WTC11 (cell line): ENCODE measurements at regions of chr21 and their contacts with region 1.

Region 1: DNA sequence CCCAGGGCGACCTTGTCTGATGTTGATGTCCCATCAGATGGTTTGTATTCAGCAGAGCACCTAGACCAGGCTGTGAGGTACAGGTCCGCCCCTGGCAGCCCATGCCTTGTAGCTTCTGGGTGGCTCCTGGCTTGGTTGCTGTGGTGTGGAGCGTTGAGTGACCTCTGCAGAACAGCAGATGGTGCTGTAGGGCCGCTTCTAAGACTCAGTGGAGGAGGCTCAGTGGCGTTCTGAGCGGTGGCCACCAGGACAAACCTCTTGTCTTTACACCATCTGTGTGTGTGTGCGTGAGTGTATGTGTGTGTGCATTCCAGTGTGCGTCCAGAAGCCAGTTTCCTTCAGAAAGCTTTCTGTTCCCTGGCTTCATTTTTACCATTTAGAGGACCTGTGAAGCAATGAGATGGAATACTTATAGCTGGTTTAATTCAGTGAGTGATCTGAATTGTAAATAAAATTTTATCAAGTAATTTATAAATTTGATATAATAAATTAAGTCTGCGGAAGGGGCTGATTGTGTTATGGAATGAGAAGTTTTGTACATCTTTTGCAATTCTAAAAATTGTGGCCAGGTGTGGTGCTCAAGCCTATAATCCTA is 66.1 kb downstream of the ADARB1 start:
- DNase-seq: peak; percentile 85
- ATAC-seq: peak; percentile 95
- H3K4me3 Mint-ChIP-seq: no peak overlapping the region
- H3K27ac Mint-ChIP-seq: no peak overlapping the region
- H3K4me1 Mint-ChIP-seq: peaks cover 3% of the 10 kb centered on the region; the same call in 1 of the 2 replicates
- H3K27me3 Mint-ChIP-seq: no peaks in the 10 kb centered on the region
- CTCF ChIP-seq: peak; percentile 54; the same call in 1 of the 2 replicates

Region 2: DNA sequence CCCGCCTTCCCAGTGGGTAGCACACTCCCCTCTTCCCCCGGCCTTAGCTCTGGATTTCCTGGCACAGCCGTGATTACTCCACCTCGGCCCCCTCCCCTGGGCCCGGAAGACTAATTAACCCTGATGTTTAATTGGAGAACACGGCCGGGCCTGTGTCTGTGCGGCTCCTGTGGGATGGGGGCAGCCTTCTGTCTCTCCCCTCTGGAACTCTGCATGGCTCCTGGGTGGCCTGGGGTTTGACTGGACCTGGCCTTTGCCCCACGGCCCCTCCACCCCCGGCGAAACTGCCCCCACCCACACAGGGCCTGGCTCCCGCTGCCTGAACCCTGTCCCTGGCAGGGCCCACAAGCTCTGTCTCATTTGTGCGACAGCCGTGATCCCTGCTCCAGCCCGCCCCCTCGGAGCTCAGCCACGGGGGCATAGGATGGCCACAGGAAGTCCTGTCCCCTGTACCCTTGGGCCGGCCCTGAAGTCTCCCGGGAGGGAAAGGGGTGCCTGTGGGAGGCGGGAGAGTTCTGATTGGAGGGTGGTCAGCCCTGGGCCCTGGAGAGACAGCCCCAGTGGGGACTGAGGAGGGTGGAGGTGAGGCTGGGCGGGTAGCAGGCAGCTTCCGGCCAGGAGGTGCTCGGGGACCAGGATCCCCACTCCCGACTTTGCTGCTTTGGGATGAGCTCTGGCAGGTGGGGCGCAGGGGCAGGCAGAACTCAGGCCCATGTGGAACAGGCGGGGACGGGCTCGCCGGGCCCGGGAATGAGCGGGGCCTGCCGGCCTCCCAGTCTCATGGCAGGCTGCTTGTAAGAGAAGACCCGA is 155.6 kb before region 1 on chr21:
- CTCF ChIA-PET with region 1: interaction called, 13 read pairs
- POLR2A ChIA-PET with region 1: no interaction called
- DNase-seq: peak; percentile 23
- ATAC-seq: peak; percentile 51
- H3K4me3 Mint-ChIP-seq: no peak overlapping the region
- H3K27ac Mint-ChIP-seq: no peak overlapping the region
- H3K4me1 Mint-ChIP-seq: no peaks in the 10 kb centered on the region
- H3K27me3 Mint-ChIP-seq: no peaks in the 10 kb centered on the region
- CTCF ChIP-seq: no peak

Region 3: GRCh38 chr21:45102391-45102932 is 38.0 kb before region 1 on chr21:
- CTCF ChIA-PET with region 1: interaction called, 16 read pairs
- POLR2A ChIA-PET with region 1: no interaction called
- DNase-seq: no peak
- ATAC-seq: peak; percentile 43
- H3K4me3 Mint-ChIP-seq: no peak overlapping the region
- H3K27ac Mint-ChIP-seq: peak overlapping the region; percentile 25; the same call in 1 of the 2 replicates
- H3K4me1 Mint-ChIP-seq: peaks cover 8% of the 10 kb centered on the region; the same call in 1 of the 2 replicates
- H3K27me3 Mint-ChIP-seq: no peaks in the 10 kb centered on the region
- CTCF ChIP-seq: no peak

Region 4: DNA sequence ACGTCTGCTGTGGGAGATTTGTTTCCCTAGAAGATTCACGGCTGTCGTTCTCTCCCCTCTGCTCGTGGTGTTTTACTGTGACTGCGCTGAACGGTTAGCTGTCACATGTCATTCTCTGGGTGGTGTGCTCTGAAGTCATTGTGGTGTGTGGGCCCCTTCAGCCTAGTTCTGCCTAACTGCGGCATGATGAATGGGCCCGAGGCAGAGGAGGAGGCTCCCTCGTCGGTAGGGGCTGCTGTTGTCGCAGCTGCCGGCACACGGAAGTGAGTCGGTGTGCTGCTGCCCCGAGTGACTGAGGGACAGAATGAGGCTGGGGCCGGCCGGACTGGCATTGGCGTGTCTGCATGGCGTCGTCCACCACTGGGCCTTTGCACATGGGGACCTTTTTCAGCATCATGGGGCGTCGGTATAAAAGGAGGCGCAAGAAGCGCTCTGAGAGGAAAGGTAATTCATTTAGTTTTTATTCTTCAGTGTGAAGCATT is 11.9 kb after region 1 on chr21:
- CTCF ChIA-PET with region 1: interaction called, 40 read pairs
- POLR2A ChIA-PET with region 1: no interaction called
- DNase-seq: peak; percentile 46
- ATAC-seq: peak; percentile 76
- H3K4me3 Mint-ChIP-seq: no peak overlapping the region
- H3K27ac Mint-ChIP-seq: peak overlapping the region; percentile 4
- H3K4me1 Mint-ChIP-seq: 0 out of 2 replicates have a peak, but pooled peaks cover 3% of the 10 kb centered on the region
- H3K27me3 Mint-ChIP-seq: no peaks in the 10 kb centered on the region
- CTCF ChIP-seq: no peak

Region 5: DNA sequence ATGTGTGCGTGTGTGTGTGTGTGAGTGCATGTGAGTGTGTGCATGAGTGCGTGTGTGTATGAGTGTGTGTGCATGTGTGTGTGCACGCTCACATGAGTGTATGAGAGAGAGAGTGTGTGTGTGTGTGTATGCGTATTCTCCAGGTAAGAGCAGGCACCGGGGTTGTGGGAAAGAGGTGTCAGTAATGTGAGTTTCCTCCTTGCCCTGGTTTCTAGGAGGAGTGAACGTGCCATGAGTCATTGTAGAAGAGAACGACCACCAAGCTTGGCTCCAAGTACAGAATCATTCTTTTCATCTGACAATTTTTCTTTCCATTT is 68.1 kb after region 1 on chr21:
- CTCF ChIA-PET with region 1: interaction called, 10 read pairs
- POLR2A ChIA-PET with region 1: no interaction called
- DNase-seq: no peak
- ATAC-seq: no peak
- H3K4me3 Mint-ChIP-seq: no peak overlapping the region
- H3K27ac Mint-ChIP-seq: no peak overlapping the region
- H3K4me1 Mint-ChIP-seq: no peaks in the 10 kb centered on the region
- H3K27me3 Mint-ChIP-seq: no peaks in the 10 kb centered on the region
- CTCF ChIP-seq: no peak

Region 6: DNA sequence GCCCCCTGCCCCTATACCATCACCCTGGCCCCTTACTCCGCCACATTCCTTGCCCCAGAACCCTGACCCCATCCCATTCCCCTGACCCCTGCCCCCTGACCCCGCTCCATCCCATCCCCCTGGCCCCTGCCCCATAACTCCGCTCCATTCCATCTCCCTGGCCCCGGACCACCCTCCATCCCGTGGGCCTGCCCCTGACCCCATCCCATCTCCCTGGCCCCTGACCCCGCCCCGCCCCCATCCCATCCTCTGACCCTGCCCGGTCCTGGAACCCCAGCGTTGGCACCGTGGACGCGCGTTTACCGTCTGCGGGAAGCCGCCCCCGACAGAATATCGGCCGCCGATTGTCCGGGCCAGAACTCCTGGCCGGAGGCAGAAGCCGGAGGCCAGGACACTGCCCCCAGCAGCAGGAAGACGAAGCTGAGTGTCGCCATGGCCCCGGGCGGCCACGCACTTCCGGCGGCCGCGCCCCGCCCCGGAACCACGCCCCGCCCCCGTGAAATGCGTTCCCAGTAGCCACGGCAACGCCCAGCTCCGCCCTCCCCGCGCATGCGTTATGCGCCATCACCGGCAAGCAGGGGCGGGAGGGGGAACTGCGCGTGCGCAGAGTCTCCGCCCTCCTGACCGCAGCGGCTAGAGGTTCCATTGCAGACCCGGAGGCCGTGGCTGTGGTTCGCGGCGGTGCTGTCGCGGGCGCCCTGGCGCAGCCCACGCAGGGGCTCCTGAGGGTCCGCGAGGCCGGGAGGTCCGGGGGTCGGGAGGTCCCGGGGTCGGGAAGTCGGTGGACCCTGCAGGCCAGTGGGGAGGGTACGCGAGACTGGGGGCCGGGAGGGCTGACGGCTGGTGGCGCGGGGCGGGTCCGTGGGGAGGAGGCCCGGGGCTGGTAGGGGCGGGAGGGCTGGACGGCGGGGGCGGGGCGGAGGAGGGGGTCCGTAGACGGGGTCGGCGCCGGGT is 147.3 kb after region 1 on chr21 and contains the start of gene POFUT2:
- CTCF ChIA-PET with region 1: interaction called, 35 read pairs
- POLR2A ChIA-PET with region 1: no interaction called
- DNase-seq: peak; percentile 98
- ATAC-seq: peak; percentile 56
- H3K4me3 Mint-ChIP-seq: peak within 1 kb of the TSS; percentile 74
- H3K27ac Mint-ChIP-seq: peak within 1 kb of the TSS; percentile 36; the same call in 1 of the 2 replicates
- H3K4me1 Mint-ChIP-seq: peaks cover 4% of the 10 kb centered on the region
- H3K27me3 Mint-ChIP-seq: no peaks in the 10 kb centered on the region
- CTCF ChIP-seq: no peak
- total RNA-seq, gene POFUT2: 37.1 to 41.4 TPM (median 39.7 TPM) in 3 replicates